ENCODE measurements at regions of chr19 and their contacts with region 1.

Region 1: GRCh38 chr19:46513461-46514236 is 18.0 kb upstream of the PNMA8B start:
- DNase-seq: peak; percentile 90 to 98
- ATAC-seq: peak; percentile 91
- H3K4me3 ChIP-seq: no peak overlapping the region
- H3K27ac ChIP-seq: no peak overlapping the region
- H3K4me1 ChIP-seq: no peaks in the 10 kb centered on the region
- H3K27me3 ChIP-seq: no peaks in the 10 kb centered on the region

Region 2: DNA sequence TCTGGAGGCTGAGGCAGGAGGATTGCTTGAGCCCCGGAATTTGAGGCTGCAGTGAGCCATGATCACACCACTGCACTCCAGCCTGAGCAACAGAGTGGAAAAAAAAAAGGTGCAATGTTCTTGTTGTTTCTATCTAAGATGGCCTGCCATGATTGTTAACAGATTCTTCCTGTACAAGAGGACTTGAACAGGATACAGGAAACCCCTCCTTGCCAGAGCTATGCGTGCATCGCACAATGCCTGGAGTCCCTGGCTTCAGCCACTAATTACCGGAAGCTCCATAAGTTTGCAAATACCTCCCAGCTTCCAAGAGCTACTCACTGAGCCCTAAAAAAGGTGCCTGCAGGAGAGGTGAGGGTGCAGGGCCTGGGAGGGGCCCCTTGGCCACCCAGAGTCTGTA is 229.9 kb before region 1 on chr19:
- intact Hi-C with region 1: loop called (anchors 1 to 5 kb)
- DNase-seq: no peak
- ATAC-seq: peak; percentile 15
- H3K4me3 ChIP-seq: no peak overlapping the region
- H3K27ac ChIP-seq: no peak overlapping the region
- H3K4me1 ChIP-seq: no peaks in the 10 kb centered on the region
- H3K27me3 ChIP-seq: no peaks in the 10 kb centered on the region

Region 3: GRCh38 chr19:46346821-46347571 is 166.7 kb before region 1 on chr19 and contains the start of gene PPP5C:
- intact Hi-C with region 1: loop called in 1 of 2 experiments (anchors 5 kb)
- DNase-seq: peak; percentile 94 to 97
- ATAC-seq: peak; percentile 90
- H3K4me3 ChIP-seq: peak within 1 kb of the TSS; percentile 63 to 69
- H3K27ac ChIP-seq: peak within 1 kb of the TSS in 1 of 2 donors; percentile 29
- H3K4me1 ChIP-seq: peaks cover under 1 to 3% of the 10 kb centered on the region in 2 donors
- H3K27me3 ChIP-seq: no peaks in the 10 kb centered on the region
- total RNA-seq, gene PPP5C: 62.7 to 63.7 TPM

Region 4: GRCh38 chr19:46392243-46392801 is 121.3 kb before region 1 on chr19:
- intact Hi-C with region 1: loop called (anchors 1 to 2 kb)
- DNase-seq: peak; percentile 58 to 80
- ATAC-seq: peak; percentile 4
- H3K4me3 ChIP-seq: no peak overlapping the region
- H3K27ac ChIP-seq: no peak overlapping the region
- H3K4me1 ChIP-seq: no peaks in the 10 kb centered on the region
- H3K27me3 ChIP-seq: no peaks in the 10 kb centered on the region

Region 5: GRCh38 chr19:46487802-46488445 is 25.7 kb before region 1 on chr19:
- intact Hi-C with region 1: loop called (anchors 2 kb)
- DNase-seq: peak; percentile 83 to 95
- ATAC-seq: peak; percentile 88
- H3K4me3 ChIP-seq: peak overlapping the region; percentile 2 to 20
- H3K27ac ChIP-seq: no peak overlapping the region
- H3K4me1 ChIP-seq: no peaks in the 10 kb centered on the region
- H3K27me3 ChIP-seq: no peaks in the 10 kb centered on the region

Measured in aorta (tissue), 5 donors.